ENCODE measurements at regions of chr1 and their contacts with region 1.

Region 1: GRCh38 chr1:156767101-156767878 is at the start of gene PRCC:
- DNase-seq: peak; percentile 83 to 100 (median 98)
- ATAC-seq: peak; percentile 94
- H3K4me3 ChIP-seq: peak within 1 kb of the TSS; percentile 89
- H3K4me3 Mint-ChIP-seq: no peak within 1 kb of the TSS
- H3K27ac ChIP-seq: peak within 1 kb of the TSS; percentile 98
- H3K27ac Mint-ChIP-seq: peak within 1 kb of the TSS in 3 of 9 donors; percentile 13 to 91 (median 88)
- H3K4me1 ChIP-seq: peaks cover 23 to 36% of the 10 kb centered on the region in 2 donors
- H3K4me1 Mint-ChIP-seq: peaks cover 35 to 46% (median 37%) of the 10 kb centered on the region in 7 donors
- H3K27me3 ChIP-seq: no peaks in the 10 kb centered on the region
- H3K27me3 Mint-ChIP-seq: no peaks in the 10 kb centered on the region
- total RNA-seq, gene PRCC: 53.2 to 88.9 (median 61.7) TPM

Region 2: DNA sequence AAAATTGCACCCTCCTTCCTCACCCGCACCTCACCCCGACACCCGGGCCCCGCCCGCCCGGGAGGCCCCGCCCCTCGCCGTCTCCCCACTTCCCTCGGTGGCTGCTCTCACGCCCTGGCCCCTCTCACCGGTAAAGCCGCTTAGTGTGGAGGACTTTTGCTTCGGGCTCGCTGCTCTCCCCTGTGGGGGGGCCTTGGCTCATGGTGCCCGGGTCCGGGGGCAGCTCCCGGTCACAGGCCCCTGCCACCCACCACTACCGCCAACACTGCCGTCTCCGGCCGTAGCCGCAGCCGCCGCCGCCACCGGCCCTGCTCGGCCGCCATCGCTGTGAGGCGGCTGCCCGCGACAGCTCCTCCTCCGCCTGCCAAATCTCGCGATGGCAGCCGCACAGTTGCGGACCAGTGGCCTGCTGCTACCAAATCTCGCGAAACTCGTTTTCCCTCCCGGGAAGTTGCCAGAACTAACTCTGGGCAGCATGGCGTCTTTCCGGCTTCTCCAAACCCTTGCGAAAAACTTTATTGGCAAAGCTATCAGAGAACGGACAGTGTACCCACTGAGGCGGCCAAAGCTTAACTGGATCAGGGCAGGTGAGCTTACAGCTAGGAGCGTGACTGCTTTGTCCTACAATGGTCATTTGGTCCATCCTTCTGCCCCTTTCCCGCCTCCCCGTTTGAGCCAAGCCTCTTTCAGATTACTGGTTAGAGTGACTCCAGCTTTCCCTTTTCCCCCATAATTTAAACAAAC is 484.6 kb before region 1 on chr1 and contains the start of gene SMG5:
- CTCF ChIA-PET with region 1: no interaction called
- POLR2A ChIA-PET with region 1: interaction called, 7 read pairs
- intact Hi-C with region 1: loop called (anchors 1 to 2 kb)
- DNase-seq: peak; percentile 89 to 98 (median 96)
- ATAC-seq: peak; percentile 95
- H3K4me3 ChIP-seq: peak within 1 kb of the TSS; percentile 93
- H3K4me3 Mint-ChIP-seq: peak within 1 kb of the TSS; percentile 85 to 99 (median 94)
- H3K27ac ChIP-seq: peak within 1 kb of the TSS; percentile 89
- H3K27ac Mint-ChIP-seq: peak within 1 kb of the TSS; percentile 89 to 98 (median 95)
- H3K4me1 ChIP-seq: peaks cover 15 to 22% of the 10 kb centered on the region in 2 donors
- H3K4me1 Mint-ChIP-seq: peaks cover 29 to 51% (median 39%) of the 10 kb centered on the region in 7 donors
- H3K27me3 ChIP-seq: no peaks in the 10 kb centered on the region
- H3K27me3 Mint-ChIP-seq: peaks cover 0 to 3% (median 0%) of the 10 kb centered on the region in 5 donors
- total RNA-seq, gene SMG5: 65.7 to 74.0 (median 69.4) TPM

Region 3: GRCh38 chr1:156591432-156592157 is 175.7 kb before region 1 on chr1 and contains the start of gene NAXE:
- CTCF ChIA-PET with region 1: no interaction called
- POLR2A ChIA-PET with region 1: no interaction called
- intact Hi-C with region 1: no loop called
- DNase-seq: peak; percentile 54 to 81 (median 65)
- ATAC-seq: peak; percentile 97
- H3K4me3 ChIP-seq: peak within 1 kb of the TSS; percentile 69
- H3K4me3 Mint-ChIP-seq: peak within 1 kb of the TSS; percentile 82 to 93 (median 89)
- H3K27ac ChIP-seq: peak within 1 kb of the TSS; percentile 89
- H3K27ac Mint-ChIP-seq: peak within 1 kb of the TSS; percentile 86 to 98 (median 93)
- H3K4me1 ChIP-seq: peaks cover 8 to 12% of the 10 kb centered on the region in 2 donors
- H3K4me1 Mint-ChIP-seq: peaks cover 16 to 32% (median 28%) of the 10 kb centered on the region in 7 donors
- H3K27me3 ChIP-seq: no peaks in the 10 kb centered on the region
- H3K27me3 Mint-ChIP-seq: no peaks in the 10 kb centered on the region
- total RNA-seq, gene NAXE: 25.6 to 58.8 (median 40.7) TPM

Region 4: DNA sequence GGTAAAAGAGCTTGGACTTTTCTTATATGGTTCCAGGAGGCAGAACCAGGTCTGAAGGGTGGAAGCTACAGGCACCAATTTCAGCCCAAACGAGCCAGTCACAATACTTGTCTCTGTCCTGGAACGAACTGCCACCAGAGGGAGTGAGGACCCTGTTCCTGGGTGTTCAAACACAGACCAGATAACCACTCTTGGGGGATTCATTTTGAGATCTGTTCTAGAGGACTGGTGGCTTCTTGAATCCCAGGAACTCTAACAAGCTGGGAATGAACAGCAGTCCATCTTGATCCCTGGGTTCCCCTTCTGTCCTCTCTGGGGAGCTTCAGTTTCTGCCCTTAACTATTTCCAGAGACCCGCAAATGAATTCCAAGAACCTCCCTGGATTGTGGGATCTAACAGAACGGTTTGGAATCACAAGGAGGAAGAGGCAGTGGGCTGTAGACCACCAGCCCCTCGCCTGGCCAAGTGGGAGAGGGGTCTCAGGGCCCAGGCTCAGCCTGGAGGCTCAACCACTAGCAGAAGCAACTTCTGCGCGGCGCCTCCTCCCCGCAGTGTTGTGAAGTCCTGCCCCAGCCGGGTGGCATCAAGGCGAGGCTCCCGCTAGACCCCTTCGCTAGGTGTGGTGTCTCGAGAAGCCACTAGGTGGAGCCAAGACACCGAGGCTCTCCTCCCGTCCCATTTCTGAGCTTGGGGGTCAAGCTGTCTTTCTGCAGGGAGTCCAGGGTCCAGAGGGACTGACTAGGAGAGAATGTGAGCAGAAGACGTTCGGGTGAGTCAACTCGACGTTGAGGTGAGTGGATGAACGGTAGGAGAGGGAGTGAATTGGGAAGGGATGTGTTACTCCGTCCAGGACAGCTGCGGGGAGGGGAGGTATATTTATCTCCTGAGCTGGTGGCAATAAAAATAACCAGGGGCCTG is 78.0 kb before region 1 on chr1:
- CTCF ChIA-PET with region 1: interaction called, 4 read pairs
- POLR2A ChIA-PET with region 1: interaction called, 4 read pairs
- intact Hi-C with region 1: loop called in 1 of 2 experiments (anchors 1 kb)
- DNase-seq: peak; percentile 54 to 78 (median 71)
- ATAC-seq: peak; percentile 98
- H3K4me3 ChIP-seq: no peak overlapping the region
- H3K4me3 Mint-ChIP-seq: peak overlapping the region in 5 of 10 donors; percentile 48 to 78 (median 60)
- H3K27ac ChIP-seq: no peak overlapping the region
- H3K27ac Mint-ChIP-seq: peak overlapping the region in 3 of 9 donors; percentile 1 to 74 (median 60)
- H3K4me1 ChIP-seq: peaks cover 5 to 20% of the 10 kb centered on the region in 2 donors
- H3K4me1 Mint-ChIP-seq: peaks cover 20 to 35% (median 30%) of the 10 kb centered on the region in 7 donors
- H3K27me3 ChIP-seq: peaks cover 0 to 5% of the 10 kb centered on the region in 2 donors
- H3K27me3 Mint-ChIP-seq: peaks cover 38 to 62% (median 44%) of the 10 kb centered on the region in 5 donors

Region 5: DNA sequence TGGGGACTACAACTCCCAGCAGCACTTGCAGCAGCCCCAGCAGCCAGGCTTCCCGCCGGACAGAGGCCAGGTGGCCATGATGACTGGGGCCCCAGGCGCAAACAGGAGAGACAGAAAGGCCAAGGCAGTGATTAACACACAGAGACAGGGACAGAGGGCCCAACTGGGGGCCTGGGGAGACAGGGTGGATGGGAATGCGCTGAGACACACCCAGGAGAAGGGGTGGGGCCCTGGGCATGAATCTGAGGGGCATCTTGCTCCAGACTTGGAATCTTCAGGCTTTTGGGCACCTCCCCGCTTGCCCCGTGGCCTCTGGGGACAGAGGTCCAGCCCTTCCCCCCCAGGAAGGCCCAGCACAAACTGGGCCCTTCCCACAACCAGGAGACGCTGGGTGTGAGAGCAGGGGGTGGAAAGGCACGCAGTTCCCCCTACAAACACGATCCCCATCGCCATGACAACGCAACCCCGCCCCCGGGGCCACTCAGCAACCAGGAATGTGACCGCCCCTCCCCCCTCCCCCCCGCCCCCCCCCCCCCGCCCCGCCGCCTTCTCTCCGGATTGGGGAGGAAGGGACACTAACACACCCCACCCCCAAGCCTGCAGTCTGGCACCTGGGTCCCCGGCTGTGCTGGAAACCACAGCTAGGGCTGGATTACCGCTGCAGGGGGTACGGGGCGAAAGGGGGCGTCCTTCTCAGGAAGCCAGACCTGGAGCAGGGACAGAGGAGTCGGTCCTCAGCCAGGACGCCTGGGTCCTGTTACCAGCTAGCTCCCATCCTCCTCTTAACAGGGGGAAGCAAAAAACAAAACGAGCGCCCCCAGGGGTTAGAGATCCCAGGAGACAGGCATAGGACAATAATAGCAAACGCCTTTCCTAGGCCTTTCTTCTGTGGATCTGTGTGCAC is 20.3 kb before region 1 on chr1:
- CTCF ChIA-PET with region 1: interaction called, 3 read pairs
- POLR2A ChIA-PET with region 1: interaction called, 53 read pairs
- intact Hi-C with region 1: loop called (anchors 1 kb)
- DNase-seq: peak in 5 of 9 donors; percentile 31 to 69 (median 45)
- ATAC-seq: no peak
- H3K4me3 ChIP-seq: peak overlapping the region; percentile 76
- H3K4me3 Mint-ChIP-seq: peak overlapping the region; percentile 88 to 98 (median 94)
- H3K27ac ChIP-seq: peak overlapping the region; percentile 90
- H3K27ac Mint-ChIP-seq: peak overlapping the region; percentile 82 to 95 (median 91)
- H3K4me1 ChIP-seq: peaks cover 35 to 43% of the 10 kb centered on the region in 2 donors
- H3K4me1 Mint-ChIP-seq: peaks cover 50 to 65% (median 55%) of the 10 kb centered on the region in 7 donors
- H3K27me3 ChIP-seq: no peaks in the 10 kb centered on the region
- H3K27me3 Mint-ChIP-seq: no peaks in the 10 kb centered on the region

Region 6: DNA sequence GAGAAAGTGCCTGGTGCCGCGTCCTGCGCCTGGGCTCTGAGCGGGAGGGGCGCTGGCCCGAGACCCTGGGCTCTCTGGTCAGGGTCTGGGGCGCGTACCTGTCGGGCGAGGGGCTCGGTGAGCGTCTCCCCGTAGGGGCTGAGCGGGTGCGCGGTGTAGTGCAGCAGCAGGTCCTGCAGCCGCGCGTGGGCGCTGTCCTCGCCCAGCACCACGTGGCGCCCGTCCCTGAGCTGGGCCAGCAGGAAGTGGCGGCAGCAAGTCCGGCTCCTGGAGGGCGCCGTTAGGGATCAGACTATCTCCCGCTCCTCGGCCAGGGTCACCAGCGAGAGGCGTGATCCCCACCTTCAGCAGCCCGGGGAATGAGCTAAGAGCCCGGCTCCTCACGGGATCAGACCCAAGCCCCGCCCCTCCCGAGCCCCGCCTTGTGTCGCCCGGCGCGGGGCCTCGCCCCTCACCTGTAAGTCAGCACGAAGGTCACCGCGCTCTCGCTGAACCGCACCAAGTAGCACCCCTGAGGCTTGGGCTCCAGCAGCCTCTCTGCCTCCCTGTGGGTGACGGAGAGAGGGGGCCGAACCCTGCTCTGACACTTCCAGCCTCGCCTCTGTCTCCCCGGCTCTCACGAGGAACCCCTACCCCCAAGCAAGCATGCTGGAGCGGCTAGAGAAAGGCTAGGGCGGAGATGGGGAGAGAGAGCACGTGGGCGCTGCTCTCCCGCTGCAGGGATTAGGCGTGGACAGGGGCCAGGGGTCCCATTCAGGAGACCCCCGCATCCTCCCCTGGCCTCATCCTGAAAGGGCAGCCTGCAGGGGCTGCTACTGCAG is 46.7 kb after region 1 on chr1:
- CTCF ChIA-PET with region 1: no interaction called
- POLR2A ChIA-PET with region 1: interaction called, 3 read pairs
- intact Hi-C with region 1: loop called (anchors 1 kb)
- DNase-seq: peak; percentile 54 to 79 (median 70)
- ATAC-seq: peak; percentile 45
- H3K4me3 ChIP-seq: peak overlapping the region; percentile 83
- H3K4me3 Mint-ChIP-seq: peak overlapping the region; percentile 82 to 97 (median 84)
- H3K27ac ChIP-seq: peak overlapping the region; percentile 98
- H3K27ac Mint-ChIP-seq: peak overlapping the region; percentile 90 to 100 (median 99)
- H3K4me1 ChIP-seq: peaks cover 33 to 59% of the 10 kb centered on the region in 2 donors
- H3K4me1 Mint-ChIP-seq: peaks cover 45 to 76% (median 60%) of the 10 kb centered on the region in 7 donors
- H3K27me3 ChIP-seq: no peaks in the 10 kb centered on the region
- H3K27me3 Mint-ChIP-seq: no peaks in the 10 kb centered on the region

Measured in naive thymus-derived CD4-positive, alpha-beta T cell (primary cell).